MCF 10A (cell line): ENCODE measurements at regions of chr3 and their contacts with region 1.

Region 1: GRCh38 chr3:65732051-65732935 is 306.4 kb downstream of the MAGI1 start:
- DNase-seq: peak; percentile 71
- H3K4me3 Mint-ChIP-seq: no peak overlapping the region
- H3K27ac Mint-ChIP-seq: no peak overlapping the region
- H3K4me1 Mint-ChIP-seq: no peaks in the 10 kb centered on the region
- H3K27me3 Mint-ChIP-seq: no peaks in the 10 kb centered on the region
- CTCF ChIP-seq: peak; percentile 69

Region 2: DNA sequence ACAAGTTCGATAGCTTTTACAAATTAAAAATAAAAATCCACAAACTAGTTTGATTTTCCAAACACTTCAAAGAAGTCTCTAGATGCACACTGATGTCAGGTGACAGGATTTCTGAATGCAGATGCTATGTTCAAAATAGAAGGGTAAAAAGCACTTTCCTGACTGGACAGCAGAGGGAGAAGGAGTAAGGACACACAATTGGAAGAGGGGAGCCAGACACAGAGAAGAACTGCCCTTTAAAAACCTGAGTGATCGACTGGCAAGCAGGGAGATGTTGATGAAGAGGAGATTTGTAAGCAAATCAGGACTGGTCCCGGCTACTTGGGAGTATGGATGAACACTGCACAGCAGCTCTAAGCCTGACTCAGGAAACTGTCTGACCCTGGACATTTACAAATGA is 306.4 kb before region 1 on chr3:
- CTCF ChIA-PET with region 1: interaction called, 12 read pairs
- POLR2A ChIA-PET with region 1: no interaction called
- intact Hi-C with region 1: loop called (anchors 1 kb)
- DNase-seq: peak; percentile 31
- H3K4me3 Mint-ChIP-seq: no peak overlapping the region
- H3K27ac Mint-ChIP-seq: no peak overlapping the region
- H3K4me1 Mint-ChIP-seq: no peaks in the 10 kb centered on the region
- H3K27me3 Mint-ChIP-seq: no peaks in the 10 kb centered on the region
- CTCF ChIP-seq: peak; percentile 27

Region 3: DNA sequence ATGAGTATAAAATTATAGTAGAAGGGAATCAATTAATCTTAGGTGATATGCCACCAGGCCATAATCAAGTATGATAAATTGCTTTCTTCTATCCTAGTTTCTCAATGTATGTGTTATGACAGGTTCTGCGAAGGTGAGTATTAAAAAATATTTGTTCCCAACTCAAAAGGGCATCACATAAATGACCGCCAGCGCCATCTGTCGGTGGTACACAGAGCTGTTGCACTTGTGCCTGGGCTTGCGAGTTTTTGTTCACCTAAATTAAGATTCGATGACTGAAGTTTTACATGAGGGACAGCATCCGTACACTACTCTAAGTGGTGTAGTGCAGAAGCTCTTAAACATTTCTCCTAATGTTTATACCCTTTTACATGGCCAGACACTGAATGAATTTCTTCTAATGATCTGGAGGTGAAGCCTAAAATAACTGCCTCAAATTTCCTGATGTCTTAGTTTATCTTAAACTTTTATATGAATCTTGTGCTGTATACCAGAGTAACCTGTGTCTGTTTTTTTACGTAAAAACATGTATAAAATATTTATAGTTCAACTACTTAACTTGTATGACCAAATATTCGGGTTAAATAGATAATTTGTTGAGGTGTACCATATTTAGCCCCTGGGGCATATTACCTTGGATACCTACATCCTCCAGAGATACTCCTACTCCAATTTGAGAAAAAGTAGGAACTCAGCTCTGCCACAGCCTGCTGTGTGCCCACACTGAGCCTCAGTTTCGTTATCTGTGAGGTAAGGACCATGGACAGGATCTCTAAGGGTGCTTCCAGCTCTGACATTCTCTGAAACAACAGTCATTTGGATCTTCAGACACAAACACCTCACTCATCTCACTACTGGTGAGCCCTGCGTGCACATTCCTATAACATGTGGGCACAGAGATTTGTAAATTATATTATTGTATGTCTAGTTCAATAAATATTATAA is 59.1 kb before region 1 on chr3:
- CTCF ChIA-PET with region 1: interaction called, 3 read pairs
- POLR2A ChIA-PET with region 1: no interaction called
- intact Hi-C with region 1: loop called (anchors 2 kb)
- DNase-seq: peak; percentile 78
- H3K4me3 Mint-ChIP-seq: no peak overlapping the region
- H3K27ac Mint-ChIP-seq: no peak overlapping the region
- H3K4me1 Mint-ChIP-seq: peaks cover 9% of the 10 kb centered on the region
- H3K27me3 Mint-ChIP-seq: no peaks in the 10 kb centered on the region
- CTCF ChIP-seq: peak; percentile 64

Region 4: DNA sequence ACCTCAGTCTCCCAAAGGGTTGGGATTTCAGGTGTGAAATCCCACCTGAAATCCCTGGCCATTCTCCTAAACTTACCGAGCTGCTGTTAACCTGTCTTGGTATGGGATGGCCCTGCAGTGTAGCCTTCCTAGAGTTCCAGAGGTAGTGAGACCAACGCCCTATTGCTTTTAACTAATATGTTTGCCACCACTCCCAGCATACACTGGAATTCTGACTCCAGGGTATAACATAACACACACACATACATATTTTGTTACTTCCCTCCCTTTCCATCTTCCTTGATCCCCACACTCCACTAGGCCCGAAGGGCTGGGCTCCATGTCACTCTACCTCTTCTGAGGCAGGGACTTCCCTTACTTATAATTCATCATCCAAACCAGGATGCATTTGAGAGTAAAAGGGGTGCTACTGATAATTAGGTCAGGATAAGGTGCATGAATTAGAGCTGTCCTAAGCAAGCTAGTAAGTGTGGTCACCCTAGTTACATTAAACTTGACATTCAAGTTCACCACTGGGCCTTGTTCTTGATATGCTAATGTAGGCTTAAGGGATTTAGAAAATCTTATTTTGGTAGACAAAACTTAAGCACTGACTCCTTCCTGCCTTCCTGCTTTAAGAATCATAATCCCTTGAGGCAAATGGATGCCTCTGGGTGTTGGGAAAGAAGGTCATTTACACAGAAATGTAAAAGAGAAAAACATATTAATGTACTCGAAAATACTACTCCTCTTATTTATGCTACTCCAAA is 11.1 kb before region 1 on chr3:
- CTCF ChIA-PET with region 1: interaction called, 20 read pairs
- POLR2A ChIA-PET with region 1: no interaction called
- intact Hi-C with region 1: no loop called
- DNase-seq: no peak
- H3K4me3 Mint-ChIP-seq: no peak overlapping the region
- H3K27ac Mint-ChIP-seq: no peak overlapping the region
- H3K4me1 Mint-ChIP-seq: no peaks in the 10 kb centered on the region
- H3K27me3 Mint-ChIP-seq: no peaks in the 10 kb centered on the region
- CTCF ChIP-seq: no peak

Region 5: DNA sequence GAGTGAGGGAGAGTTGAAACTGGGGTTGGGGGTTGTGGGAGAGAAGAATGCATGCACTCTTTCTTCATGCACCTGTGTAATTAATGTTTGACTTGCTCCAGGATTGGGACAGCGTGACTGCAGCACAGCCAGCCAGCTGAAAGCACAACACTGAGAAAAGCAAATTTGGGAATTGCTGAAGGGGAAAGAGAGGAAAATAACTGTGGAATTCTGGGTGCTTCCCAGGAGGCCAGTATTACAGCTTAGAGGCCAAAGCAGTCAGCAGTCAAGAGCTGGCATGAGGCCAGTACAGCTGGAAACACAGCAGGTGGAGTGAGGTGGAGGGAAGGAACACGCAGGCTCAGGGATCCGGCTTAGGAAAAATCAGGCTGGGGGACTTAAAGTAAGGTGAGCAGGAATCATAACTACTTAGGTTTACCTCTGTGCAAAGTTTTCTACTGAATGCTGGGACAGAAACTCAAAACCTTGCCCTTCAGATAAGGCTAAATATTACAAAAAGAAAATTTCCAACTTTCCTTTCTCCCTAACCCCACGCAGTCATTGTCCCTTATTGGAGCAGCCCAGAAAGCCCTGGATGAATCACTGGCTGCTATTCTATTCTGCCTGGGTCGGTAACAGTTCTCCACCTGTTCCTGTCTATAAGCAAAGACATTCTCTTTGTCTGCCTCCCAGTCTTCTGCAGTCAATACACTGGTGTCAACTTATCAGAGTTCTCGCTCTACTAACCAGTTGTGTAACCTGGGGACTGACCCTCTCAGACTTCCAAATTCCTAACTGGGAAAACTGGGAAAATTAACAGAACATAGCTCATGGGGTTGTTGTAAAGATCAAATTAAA is 139.2 kb after region 1 on chr3:
- CTCF ChIA-PET with region 1: no interaction called
- POLR2A ChIA-PET with region 1: no interaction called
- intact Hi-C with region 1: no loop called
- DNase-seq: peak; percentile 21
- H3K4me3 Mint-ChIP-seq: no peak overlapping the region
- H3K27ac Mint-ChIP-seq: no peak overlapping the region
- H3K4me1 Mint-ChIP-seq: peaks cover 11% of the 10 kb centered on the region
- H3K27me3 Mint-ChIP-seq: no peaks in the 10 kb centered on the region
- CTCF ChIP-seq: no peak